ENCODE measurements at regions of chr20 and their contacts with region 1.

Region 1: GRCh38 chr20:36493013-36493800 is 48.1 kb upstream of the MYL9 start:
- DNase-seq: no peak
- H3K4me3 ChIP-seq: no peak overlapping the region
- H3K4me3 Mint-ChIP-seq: peak overlapping the region in 1 of 8 donors; percentile 85
- H3K27ac ChIP-seq: peak overlapping the region; percentile 59
- H3K27ac Mint-ChIP-seq: peak overlapping the region in 6 of 7 donors; percentile 70 to 95 (median 92)
- H3K4me1 ChIP-seq: peaks cover 39% of the 10 kb centered on the region
- H3K4me1 Mint-ChIP-seq: peaks cover 32 to 59% (median 43%) of the 10 kb centered on the region in 4 donors
- H3K27me3 ChIP-seq: no peaks in the 10 kb centered on the region
- H3K27me3 Mint-ChIP-seq: no peaks in the 10 kb centered on the region

Region 2: GRCh38 chr20:36235892-36236785 is 257.1 kb before region 1 on chr20 and contains the start of gene AAR2:
- CTCF ChIA-PET with region 1: no interaction called
- POLR2A ChIA-PET with region 1: no interaction called
- intact Hi-C with region 1: loop called (anchors 5 kb)
- DNase-seq: peak; percentile 74 to 78 (median 74)
- H3K4me3 ChIP-seq: peak within 1 kb of the TSS; percentile 62 to 93
- H3K4me3 Mint-ChIP-seq: peak within 1 kb of the TSS; percentile 91 to 98 (median 96)
- H3K27ac ChIP-seq: peak within 1 kb of the TSS; percentile 69
- H3K27ac Mint-ChIP-seq: peak within 1 kb of the TSS; percentile 72 to 97 (median 95)
- H3K4me1 ChIP-seq: peaks cover 45% of the 10 kb centered on the region
- H3K4me1 Mint-ChIP-seq: peaks cover 22 to 53% (median 35%) of the 10 kb centered on the region in 4 donors
- H3K27me3 ChIP-seq: no peaks in the 10 kb centered on the region
- H3K27me3 Mint-ChIP-seq: peaks cover 0 to under 1% of the 10 kb centered on the region in 2 donors
- total RNA-seq, gene AAR2: 21.7 to 23.0 TPM

Region 3: GRCh38 chr20:36460648-36461599 is 32.3 kb before region 1 on chr20:
- CTCF ChIA-PET with region 1: interaction called, 5 read pairs
- POLR2A ChIA-PET with region 1: interaction called, 33 read pairs
- intact Hi-C with region 1: loop called (anchors 2 kb)
- DNase-seq: peak; percentile 85 to 90 (median 86)
- H3K4me3 ChIP-seq: peak overlapping the region; percentile 8 to 37
- H3K4me3 Mint-ChIP-seq: peak overlapping the region; percentile 80 to 86 (median 82)
- H3K27ac ChIP-seq: peak overlapping the region; percentile 90
- H3K27ac Mint-ChIP-seq: peak overlapping the region; percentile 94 to 97 (median 96)
- H3K4me1 ChIP-seq: peaks cover 48% of the 10 kb centered on the region
- H3K4me1 Mint-ChIP-seq: peaks cover 31 to 56% (median 42%) of the 10 kb centered on the region in 4 donors
- H3K27me3 ChIP-seq: no peaks in the 10 kb centered on the region
- H3K27me3 Mint-ChIP-seq: no peaks in the 10 kb centered on the region

Measured in CD4-positive, alpha-beta memory T cell (primary cell).